ENCODE measurements at regions of chr18 and their contacts with region 1.

Region 1: GRCh38 chr18:58578835-58579560 is 49.9 kb downstream of the ALPK2 start:
- DNase-seq: no peak
- ATAC-seq: peak; percentile 79 to 82
- H3K4me3 ChIP-seq: peak overlapping the region in 3 of 4 donors; percentile 11 to 31 (median 22)
- H3K27ac ChIP-seq: peak overlapping the region; percentile 81 to 89 (median 82)
- H3K4me1 ChIP-seq: peaks cover 41 to 51% of the 10 kb centered on the region in 2 donors
- H3K27me3 ChIP-seq: no peaks in the 10 kb centered on the region
- CTCF ChIP-seq: no peak
- POLR2A ChIP-seq: no peak

Region 2: DNA sequence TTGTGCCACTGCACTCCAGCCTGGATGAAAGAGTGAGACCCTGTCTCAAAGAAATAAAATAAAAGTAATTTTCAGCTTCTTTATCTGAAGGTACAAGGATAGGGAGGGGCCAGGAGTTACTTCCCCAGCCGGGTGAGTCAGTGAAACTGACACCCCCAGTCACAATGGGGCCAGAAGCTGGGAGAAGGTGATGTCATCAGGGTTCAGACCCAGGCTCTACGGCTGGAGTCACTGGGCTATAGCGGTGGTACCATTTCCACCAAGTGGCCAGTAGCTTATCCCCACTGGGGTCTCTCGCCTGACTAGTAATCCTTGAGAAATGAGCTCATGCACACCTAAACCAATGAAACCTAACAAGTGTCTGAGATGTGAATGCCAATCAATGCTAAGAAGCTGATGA is 58.0 kb before region 1 on chr18:
- in situ Hi-C with region 1: no loop called
- intact Hi-C with region 1: no loop called
- DNase-seq: peak in 1 of 2 donors; percentile 28
- ATAC-seq: peak; percentile 41 to 82
- H3K4me3 ChIP-seq: no peak overlapping the region
- H3K27ac ChIP-seq: peak overlapping the region in 1 of 4 donors; percentile 19
- H3K4me1 ChIP-seq: no peaks in the 10 kb centered on the region
- H3K27me3 ChIP-seq: no peaks in the 10 kb centered on the region
- CTCF ChIP-seq: no peak
- POLR2A ChIP-seq: no peak

Region 3: DNA sequence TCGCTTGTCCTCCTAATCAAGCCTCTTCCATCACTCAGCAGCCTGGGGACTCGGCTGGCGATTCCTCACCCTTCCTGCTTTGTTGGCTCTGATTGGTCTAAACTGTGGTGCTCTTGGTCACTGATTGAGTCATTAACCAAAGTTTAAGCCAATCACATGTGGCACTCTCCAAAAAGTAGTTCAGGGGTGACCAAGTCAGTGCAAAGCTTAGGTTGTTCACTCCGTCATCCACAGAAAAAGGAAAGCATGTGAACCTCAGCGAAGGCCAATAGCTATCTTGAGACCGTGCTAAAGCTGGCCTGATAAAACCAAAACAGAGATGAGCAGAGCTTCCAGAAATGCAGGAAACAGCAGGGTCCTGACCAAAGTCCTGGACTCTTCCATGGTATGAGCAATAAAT is 45.0 kb after region 1 on chr18:
- in situ Hi-C with region 1: no loop called
- intact Hi-C with region 1: loop called (anchors 2 kb)
- DNase-seq: no peak
- ATAC-seq: no peak
- H3K4me3 ChIP-seq: no peak overlapping the region
- H3K27ac ChIP-seq: peak overlapping the region; percentile 83 to 92 (median 87)
- H3K4me1 ChIP-seq: peaks cover 19 to 26% of the 10 kb centered on the region in 2 donors
- H3K27me3 ChIP-seq: no peaks in the 10 kb centered on the region
- CTCF ChIP-seq: no peak
- POLR2A ChIP-seq: no peak